Posterior cingulate gyrus (tissue), 11 donors: ENCODE measurements at regions of chr14 and their contacts with region 1.

Region 1: DNA sequence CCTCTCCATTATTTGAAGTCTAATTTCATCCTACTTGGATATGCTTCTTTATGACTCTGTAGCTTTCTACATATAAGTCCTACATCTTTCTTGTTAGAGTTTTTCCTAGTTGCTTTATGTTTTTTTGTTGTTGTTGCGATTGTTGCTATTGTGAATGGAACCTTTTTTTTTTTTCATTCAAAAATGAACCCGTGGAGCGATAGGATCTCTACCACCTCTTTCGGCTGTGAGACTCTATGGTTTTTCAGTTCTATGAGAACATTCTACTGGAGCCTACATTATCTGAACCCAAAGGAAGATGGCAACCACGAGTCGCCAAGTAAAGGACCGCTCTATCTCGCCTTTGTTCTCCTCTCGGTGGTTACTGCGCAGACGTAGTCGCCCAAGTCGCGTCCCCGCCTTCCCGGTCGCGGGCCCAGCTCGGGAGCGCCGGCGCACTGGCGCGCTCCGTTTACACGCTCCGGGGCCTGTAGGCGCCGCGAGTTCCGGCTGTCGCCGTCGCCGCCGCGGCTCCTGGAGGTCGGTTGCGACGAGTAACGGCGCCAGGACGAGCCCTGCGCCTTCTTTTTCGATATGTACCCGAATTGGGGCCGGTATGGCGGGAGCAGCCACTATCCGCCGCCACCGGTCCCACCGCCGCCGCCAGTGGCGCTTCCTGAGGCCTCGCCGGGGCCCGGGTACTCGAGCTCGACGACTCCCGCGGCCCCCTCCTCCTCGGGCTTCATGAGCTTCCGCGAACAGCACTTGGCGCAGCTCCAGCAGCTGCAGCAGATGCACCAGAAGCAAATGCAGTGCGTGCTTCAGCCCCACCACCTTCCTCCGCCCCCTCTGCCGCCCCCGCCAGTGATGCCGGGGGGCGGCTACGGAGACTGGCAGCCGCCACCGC is at the start of gene YLPM1:
- DNase-seq: peak; percentile 84 to 99 (median 91)

Region 2: DNA sequence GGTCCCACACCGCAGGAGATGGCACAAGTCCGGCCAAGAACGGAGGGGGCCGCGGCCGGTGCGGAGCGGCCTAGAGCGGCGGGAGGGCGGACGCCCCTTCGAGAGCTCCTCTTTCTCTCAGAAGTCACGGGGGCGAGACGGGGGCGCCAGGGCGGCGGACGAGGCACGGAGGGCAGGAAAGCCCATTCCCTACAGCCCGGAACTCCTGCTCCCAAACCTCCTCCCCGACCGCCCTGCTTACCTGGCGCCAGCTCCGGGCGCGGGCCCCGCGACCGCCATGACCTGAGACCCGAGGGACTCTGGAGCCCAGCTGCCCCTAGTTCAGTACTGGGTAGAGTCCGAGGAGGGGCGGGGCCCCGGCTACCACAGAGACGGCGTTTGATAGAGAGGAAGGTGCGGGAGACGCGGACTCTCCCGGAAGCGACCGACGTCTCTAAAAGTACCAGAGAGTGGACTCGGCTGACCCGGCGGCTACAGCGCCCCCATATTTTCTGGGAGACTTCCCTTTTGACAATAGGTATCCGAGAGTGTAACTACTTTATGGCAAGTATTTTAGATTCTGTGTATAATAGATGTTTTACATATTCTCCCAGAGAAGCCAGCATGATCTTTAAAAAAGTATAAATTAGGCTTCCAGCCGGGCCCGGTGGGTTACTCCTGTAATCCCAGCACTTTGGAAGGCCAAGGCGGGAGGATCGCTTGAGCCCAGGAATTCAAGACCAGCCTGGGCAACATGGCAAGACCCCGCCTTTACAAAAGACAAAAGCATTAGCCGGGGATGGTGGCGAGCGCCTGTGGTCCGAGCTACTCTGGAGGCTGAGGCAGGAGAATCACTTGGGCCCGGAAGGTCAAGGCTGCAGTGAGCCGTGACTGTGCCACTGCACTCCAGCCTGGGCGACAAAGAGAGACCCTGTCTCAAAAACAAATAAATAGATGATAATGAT is 460.3 kb before region 1 on chr14 and contains the start of gene ABCD4:
- intact Hi-C with region 1: loop called (anchors 2 kb)
- DNase-seq: peak; percentile 93 to 99 (median 96)

Region 3: GRCh38 chr14:74712499-74713394 is 50.4 kb before region 1 on chr14 and contains the starts of genes AREL1 and FCF1:
- intact Hi-C with region 1: loop called (anchors 5 kb)
- DNase-seq: peak; percentile 69 to 97 (median 86)